ENCODE measurements at regions of chr3 and their contacts with region 1.

Region 1: DNA sequence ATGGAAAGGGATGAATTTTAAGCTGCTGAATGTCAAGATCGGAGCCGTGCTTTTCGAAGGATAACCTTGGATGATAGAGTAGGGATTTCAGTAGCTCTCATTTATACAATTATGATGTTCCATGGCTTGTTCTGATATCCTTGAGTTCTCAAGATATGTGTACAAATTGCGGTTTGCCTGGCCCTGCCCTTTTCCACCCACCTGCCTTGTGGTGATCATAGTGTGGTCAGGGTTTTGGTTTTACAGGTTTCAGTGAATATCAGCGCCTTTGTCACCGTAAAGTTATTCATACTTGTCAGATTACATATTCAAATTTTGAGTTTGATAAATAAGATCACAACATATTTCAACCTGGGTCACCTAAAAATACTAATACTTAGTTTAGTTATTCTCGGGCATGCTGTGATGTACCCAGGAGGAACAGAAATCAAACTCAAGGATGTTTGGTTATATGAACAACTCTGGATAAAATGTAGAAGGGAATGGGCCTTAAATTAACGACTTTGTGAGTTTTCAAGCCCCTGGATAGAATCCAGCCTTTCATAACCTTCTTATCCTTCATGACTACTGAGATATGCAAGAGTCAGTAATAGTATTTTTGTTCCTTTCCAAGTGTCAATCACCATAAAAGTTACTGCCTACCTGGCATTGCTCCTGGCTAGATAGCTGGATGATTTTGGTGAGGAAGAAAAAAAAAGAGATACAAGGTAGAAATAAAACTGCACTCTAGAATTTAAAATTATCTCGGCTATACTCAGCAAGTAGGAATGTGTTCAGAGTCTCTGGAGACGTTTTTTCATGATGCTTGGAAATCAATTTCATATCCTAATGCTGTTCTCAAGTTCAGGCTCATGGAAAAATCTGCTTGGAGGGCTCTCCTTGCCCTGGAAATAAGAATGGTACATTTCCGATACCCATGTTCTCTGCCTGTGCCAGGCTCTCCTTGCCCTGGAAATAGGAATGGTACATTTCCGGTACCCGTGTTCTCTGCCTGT is 209.2 kb upstream of the TPRG1 start:
- DNase-seq: no peak
- ATAC-seq: no peak
- H3K4me3 ChIP-seq: no peak overlapping the region
- H3K27ac ChIP-seq: no peak overlapping the region
- H3K4me1 ChIP-seq: no peaks in the 10 kb centered on the region
- H3K27me3 ChIP-seq: peaks cover 8% of the 10 kb centered on the region
- CTCF ChIP-seq: no peak

Region 2: DNA sequence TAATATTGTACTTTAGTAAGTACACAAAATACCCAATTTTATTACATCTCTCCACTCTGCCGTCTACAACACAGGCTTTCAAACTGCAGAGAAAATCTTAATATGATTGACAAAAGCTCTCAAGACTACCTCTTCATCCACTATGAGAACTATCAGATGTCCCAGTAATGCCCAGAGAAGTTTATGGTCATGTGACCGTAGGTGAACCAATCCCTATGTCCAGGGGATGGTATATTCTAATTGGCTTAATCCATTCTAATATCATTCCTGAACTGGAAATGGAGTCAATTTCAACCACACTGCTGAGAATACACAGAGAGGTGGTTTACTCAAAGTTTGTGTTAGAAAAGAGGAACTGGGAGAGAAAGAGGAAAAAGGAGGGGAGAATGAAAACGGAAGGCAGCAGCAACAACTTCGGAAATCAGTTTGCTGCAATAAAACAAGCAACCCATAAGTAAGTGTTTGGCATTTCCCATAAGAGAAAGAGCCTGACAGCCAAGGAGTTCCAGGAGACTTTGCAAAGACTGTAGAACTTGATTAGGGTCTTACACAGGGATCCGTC is 1299.6 kb before region 1 on chr3:
- CTCF ChIA-PET with region 1: interaction called, 12 read pairs
- POLR2A ChIA-PET with region 1: no interaction called
- in situ Hi-C with region 1: no loop called
- intact Hi-C with region 1: no loop called
- DNase-seq: no peak
- ATAC-seq: no peak
- H3K4me3 ChIP-seq: no peak overlapping the region
- H3K27ac ChIP-seq: no peak overlapping the region
- H3K4me1 ChIP-seq: no peaks in the 10 kb centered on the region
- H3K27me3 ChIP-seq: peaks cover 12% of the 10 kb centered on the region; the same call in 1 of the 2 replicates
- CTCF ChIP-seq: no peak

Region 3: GRCh38 chr3:188133219-188133618 is 829.3 kb before region 1 on chr3:
- CTCF ChIA-PET with region 1: no interaction called
- POLR2A ChIA-PET with region 1: no interaction called
- in situ Hi-C with region 1: no loop called
- intact Hi-C with region 1: no loop called
- DNase-seq: no peak
- ATAC-seq: no peak
- H3K4me3 ChIP-seq: no peak overlapping the region
- H3K27ac ChIP-seq: no peak overlapping the region
- H3K4me1 ChIP-seq: no peaks in the 10 kb centered on the region
- H3K27me3 ChIP-seq: no peaks in the 10 kb centered on the region
- CTCF ChIP-seq: no peak

Measured in Panc1 (cell line).